ENCODE measurements at regions of chr12 and their contacts with region 1.

Region 1: DNA sequence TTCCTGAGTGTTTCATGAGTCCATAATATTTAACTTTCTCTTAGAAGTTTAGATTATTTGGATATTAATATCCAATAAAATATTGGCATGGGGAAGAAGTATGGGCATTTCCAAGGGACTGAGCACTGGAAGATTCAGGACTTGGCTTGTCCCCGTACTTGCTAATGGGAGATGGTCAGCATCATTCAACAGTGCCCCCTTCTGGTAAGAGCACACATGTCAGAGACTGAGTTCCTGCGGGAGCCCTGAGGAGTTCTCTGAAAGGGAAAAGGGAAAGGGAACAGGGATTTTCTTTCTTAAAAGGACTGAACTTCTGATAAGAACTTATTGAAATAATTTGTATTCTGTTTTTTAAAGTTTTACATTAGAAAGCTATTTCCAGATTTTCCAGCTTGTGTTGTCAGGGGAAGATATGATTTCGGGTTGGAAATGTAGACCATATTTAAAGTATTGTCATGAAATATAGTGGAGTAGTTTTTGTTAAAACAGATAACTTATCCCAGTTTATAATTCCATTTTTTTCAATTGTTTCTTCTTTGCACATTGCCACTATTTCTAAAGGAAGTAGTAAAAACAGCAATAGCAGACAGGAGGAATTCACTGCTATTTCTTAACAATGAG is 59.8 kb upstream of the C12orf71 start:
- DNase-seq: no peak
- H3K4me3 Mint-ChIP-seq: no peak overlapping the region
- H3K27ac Mint-ChIP-seq: no peak overlapping the region
- H3K4me1 Mint-ChIP-seq: peaks cover 29% of the 10 kb centered on the region
- H3K27me3 Mint-ChIP-seq: no peaks in the 10 kb centered on the region

Region 2: GRCh38 chr12:27024291-27024690 is 117.9 kb before region 1 on chr12:
- intact Hi-C with region 1: loop called (anchors 5 kb)
- DNase-seq: no peak
- H3K4me3 Mint-ChIP-seq: peak overlapping the region; percentile 90
- H3K27ac Mint-ChIP-seq: no peak overlapping the region
- H3K4me1 Mint-ChIP-seq: peaks cover 36% of the 10 kb centered on the region
- H3K27me3 Mint-ChIP-seq: peaks cover 1% of the 10 kb centered on the region

Region 3: GRCh38 chr12:27034607-27035293 is 107.5 kb before region 1 on chr12:
- intact Hi-C with region 1: loop called (anchors 2 kb)
- DNase-seq: no peak
- H3K4me3 Mint-ChIP-seq: no peak overlapping the region
- H3K27ac Mint-ChIP-seq: no peak overlapping the region
- H3K4me1 Mint-ChIP-seq: peaks cover under 1% of the 10 kb centered on the region
- H3K27me3 Mint-ChIP-seq: no peaks in the 10 kb centered on the region

Region 4: DNA sequence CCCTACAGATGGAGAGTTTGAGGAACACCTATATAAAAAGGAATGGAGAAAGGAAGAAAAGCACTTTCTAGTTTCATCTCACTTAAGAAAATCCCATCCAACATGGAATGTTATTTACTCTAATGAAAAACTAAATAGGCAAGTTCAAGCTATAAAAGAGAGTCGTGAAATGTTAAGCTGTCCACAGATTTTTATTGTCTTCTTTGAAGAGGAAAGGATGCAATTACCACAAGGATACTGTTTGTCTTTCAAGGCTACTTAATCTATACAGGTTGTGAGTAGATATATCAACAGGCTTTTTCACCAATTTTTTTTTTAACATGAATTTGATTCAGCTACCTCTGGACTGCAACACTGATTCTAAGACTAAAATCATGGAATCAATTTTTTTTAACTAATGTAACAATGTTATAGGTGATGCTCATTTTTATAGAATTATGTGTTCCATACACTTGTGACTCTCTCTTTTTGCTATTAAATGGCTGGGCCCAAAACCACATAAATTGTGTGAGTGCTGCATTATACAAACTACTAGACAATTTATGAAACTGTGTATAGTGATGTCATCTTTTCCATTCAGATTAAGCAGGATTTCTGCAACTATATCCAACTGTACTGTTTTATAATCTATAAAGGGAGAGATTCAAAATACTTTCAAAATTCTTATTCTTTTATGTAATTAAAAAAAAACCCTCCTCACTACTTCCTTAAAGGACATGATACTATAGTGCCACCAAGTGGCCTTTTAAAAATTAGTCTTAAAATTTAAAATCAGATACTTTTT is 163.7 kb after region 1 on chr12:
- intact Hi-C with region 1: loop called (anchors 1 kb)
- DNase-seq: no peak
- H3K4me3 Mint-ChIP-seq: no peak overlapping the region
- H3K27ac Mint-ChIP-seq: peak overlapping the region; percentile 28
- H3K4me1 Mint-ChIP-seq: peaks cover 17% of the 10 kb centered on the region
- H3K27me3 Mint-ChIP-seq: no peaks in the 10 kb centered on the region

Measured in activated T-helper 2 cell treated with anti-CD3 and anti-CD28 coated beads, Interferon-gamma antibody, Interleukin-2, Interleukin-4, amounts not matched to agents 10 μg/mL and 5 μg/mL and 100 μg/mL, durations not matched to agents 14 hours and 24 hours and 36 hours (primary cell).